CD4-positive, alpha-beta T cell (primary cell): ENCODE measurements at regions of chr7 and their contacts with region 1.

Region 1: DNA sequence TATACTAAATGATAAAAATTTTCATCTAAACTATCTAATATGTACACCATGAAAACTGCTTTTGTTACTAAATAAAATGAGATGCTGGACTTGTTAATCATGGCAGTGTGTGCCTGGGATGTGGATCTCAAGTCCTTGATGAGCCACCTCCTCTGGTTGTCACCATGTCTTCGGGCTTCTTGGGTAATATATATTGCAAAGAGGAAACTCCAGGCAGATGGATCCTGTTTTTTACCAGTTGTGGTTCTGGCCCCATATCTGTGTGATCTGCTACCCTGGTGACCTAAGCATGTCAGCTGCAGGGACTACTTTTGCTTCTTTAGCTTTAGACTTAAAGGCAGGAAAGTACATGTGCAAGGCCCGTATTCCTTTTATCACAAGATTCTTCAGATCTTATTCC is 46.2 kb downstream of the TMEM60 start:
- DNase-seq: peak in 3 of 14 experiments; percentile 27 to 55 (median 41)
- ATAC-seq: peak; percentile 17
- H3K4me3 ChIP-seq: no peak overlapping the region
- H3K4me3 Mint-ChIP-seq: no peak overlapping the region
- H3K27ac ChIP-seq: no peak overlapping the region
- H3K27ac Mint-ChIP-seq: peak overlapping the region; percentile 63
- H3K4me1 ChIP-seq: peaks cover 13% of the 10 kb centered on the region
- H3K4me1 Mint-ChIP-seq: peaks cover 62% of the 10 kb centered on the region
- H3K27me3 ChIP-seq: no peaks in the 10 kb centered on the region
- H3K27me3 Mint-ChIP-seq: no peaks in the 10 kb centered on the region
- CTCF ChIP-seq: no peak

Region 2: GRCh38 chr7:77536413-77537135 is 215.4 kb before region 1 on chr7:
- CTCF ChIA-PET with region 1: no interaction called
- POLR2A ChIA-PET with region 1: no interaction called
- intact Hi-C with region 1: no loop called
- DNase-seq: peak; percentile 92 to 99 (median 97)
- ATAC-seq: peak; percentile 88
- H3K4me3 ChIP-seq: peak overlapping the region; percentile 86
- H3K4me3 Mint-ChIP-seq: peak overlapping the region; percentile 95
- H3K27ac ChIP-seq: peak overlapping the region; percentile 45 to 55
- H3K27ac Mint-ChIP-seq: peak overlapping the region; percentile 83
- H3K4me1 ChIP-seq: peaks cover 19% of the 10 kb centered on the region
- H3K4me1 Mint-ChIP-seq: peaks cover 20% of the 10 kb centered on the region
- H3K27me3 ChIP-seq: no peaks in the 10 kb centered on the region
- H3K27me3 Mint-ChIP-seq: no peaks in the 10 kb centered on the region
- CTCF ChIP-seq: no peak

Region 3: DNA sequence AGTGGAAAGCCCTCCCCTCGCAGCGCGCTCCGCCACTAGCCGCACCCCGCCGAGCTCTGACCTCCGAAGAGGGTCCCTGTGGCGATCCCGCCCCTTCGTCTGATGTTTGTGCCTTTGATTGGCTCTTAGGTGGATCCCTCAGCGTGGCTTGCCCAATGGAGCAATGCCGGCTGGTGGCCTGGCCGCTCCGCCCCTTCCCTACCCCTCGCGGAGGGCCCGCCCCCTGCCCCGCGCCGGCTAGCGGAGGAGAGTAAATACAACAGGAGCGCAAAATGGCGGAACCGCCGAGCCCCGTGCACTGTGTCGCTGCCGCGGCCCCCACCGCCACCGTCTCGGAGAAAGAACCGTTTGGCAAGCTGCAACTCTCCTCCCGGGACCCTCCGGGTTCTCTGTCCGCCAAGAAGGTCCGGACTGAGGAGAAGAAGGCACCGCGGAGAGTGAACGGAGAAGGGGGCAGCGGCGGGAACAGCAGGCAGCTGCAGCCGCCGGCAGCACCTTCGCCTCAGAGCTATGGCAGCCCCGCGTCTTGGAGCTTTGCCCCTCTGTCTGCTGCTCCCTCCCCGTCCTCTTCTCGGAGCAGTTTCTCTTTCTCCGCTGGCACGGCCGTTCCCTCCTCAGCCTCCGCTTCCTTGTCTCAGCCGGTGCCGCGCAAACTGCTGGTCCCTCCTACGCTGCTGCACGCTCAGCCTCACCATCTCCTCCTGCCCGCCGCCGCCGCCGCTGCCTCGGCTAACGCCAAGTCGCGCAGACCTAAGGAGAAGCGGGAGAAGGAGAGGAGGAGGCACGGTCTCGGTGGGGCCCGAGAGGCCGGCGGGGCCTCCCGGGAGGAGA is 55.6 kb before region 1 on chr7 and contains the start of gene RSBN1L:
- CTCF ChIA-PET with region 1: interaction called, 7 read pairs
- POLR2A ChIA-PET with region 1: interaction called, 8 read pairs
- intact Hi-C with region 1: loop called (anchors 2 to 10 kb)
- DNase-seq: peak; percentile 95 to 99 (median 98)
- ATAC-seq: peak; percentile 95
- H3K4me3 ChIP-seq: peak within 1 kb of the TSS; percentile 100
- H3K4me3 Mint-ChIP-seq: peak within 1 kb of the TSS; percentile 100
- H3K27ac ChIP-seq: peak within 1 kb of the TSS; percentile 90 to 92
- H3K27ac Mint-ChIP-seq: peak within 1 kb of the TSS; percentile 99
- H3K4me1 ChIP-seq: peaks cover 24% of the 10 kb centered on the region
- H3K4me1 Mint-ChIP-seq: peaks cover 72% of the 10 kb centered on the region
- H3K27me3 ChIP-seq: no peaks in the 10 kb centered on the region
- H3K27me3 Mint-ChIP-seq: no peaks in the 10 kb centered on the region
- CTCF ChIP-seq: peak; percentile 55
- total RNA-seq, gene RSBN1L: 9.0 to 9.6 TPM

Region 4: DNA sequence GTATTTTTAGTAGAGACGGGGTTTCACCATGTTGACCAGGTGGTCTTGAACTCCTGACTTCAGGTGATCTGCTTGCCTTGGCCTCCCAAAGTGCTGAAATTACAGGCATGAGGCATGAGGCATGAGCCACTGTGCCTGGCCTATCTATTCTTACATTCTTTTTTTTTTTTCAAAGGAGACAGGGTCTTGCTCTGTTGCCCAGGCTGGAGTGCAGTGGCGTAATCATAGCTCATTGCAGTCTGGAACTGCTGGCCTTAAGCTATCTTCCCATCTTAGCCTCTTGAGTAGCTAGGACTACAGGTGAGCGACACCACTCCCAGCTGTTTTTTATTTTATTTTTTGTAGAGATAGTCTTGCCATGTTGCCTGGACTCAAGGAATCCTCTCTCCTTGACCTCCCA is 35.2 kb before region 1 on chr7:
- CTCF ChIA-PET with region 1: no interaction called
- POLR2A ChIA-PET with region 1: no interaction called
- intact Hi-C with region 1: loop called in 1 of 2 experiments (anchors 5 kb)
- DNase-seq: no peak
- ATAC-seq: no peak
- H3K4me3 ChIP-seq: no peak overlapping the region
- H3K4me3 Mint-ChIP-seq: no peak overlapping the region
- H3K27ac ChIP-seq: no peak overlapping the region
- H3K27ac Mint-ChIP-seq: no peak overlapping the region
- H3K4me1 ChIP-seq: peaks cover 33% of the 10 kb centered on the region
- H3K4me1 Mint-ChIP-seq: peaks cover 66% of the 10 kb centered on the region
- H3K27me3 ChIP-seq: no peaks in the 10 kb centered on the region
- H3K27me3 Mint-ChIP-seq: no peaks in the 10 kb centered on the region
- CTCF ChIP-seq: no peak